PC-3 (cell line): ENCODE measurements at regions of chr15 and their contacts with region 1.

Region 1: GRCh38 chr15:69394556-69395282 is 19.4 kb upstream of the KIF23 start:
- DNase-seq: peak; percentile 78
- ATAC-seq: peak; percentile 72
- H3K4me3 ChIP-seq: no peak overlapping the region
- H3K27ac ChIP-seq: no peak overlapping the region
- H3K4me1 ChIP-seq: peaks cover 39% of the 10 kb centered on the region
- H3K27me3 ChIP-seq: no peaks in the 10 kb centered on the region
- CTCF ChIP-seq: peak; percentile 91

Region 2: GRCh38 chr15:69305204-69305931 is 89.4 kb before region 1 on chr15:
- CTCF ChIA-PET with region 1: no interaction called
- POLR2A ChIA-PET with region 1: no interaction called
- intact Hi-C with region 1: loop called (anchors 5 kb)
- DNase-seq: peak; percentile 90
- ATAC-seq: peak; percentile 90
- H3K4me3 ChIP-seq: no peak overlapping the region
- H3K27ac ChIP-seq: peak overlapping the region; percentile 81
- H3K4me1 ChIP-seq: peaks cover 41% of the 10 kb centered on the region
- H3K27me3 ChIP-seq: no peaks in the 10 kb centered on the region
- CTCF ChIP-seq: no peak

Region 3: GRCh38 chr15:69422336-69422895 is 27.7 kb after region 1 on chr15:
- CTCF ChIA-PET with region 1: no interaction called
- POLR2A ChIA-PET with region 1: no interaction called
- intact Hi-C with region 1: no loop called
- DNase-seq: no peak
- ATAC-seq: no peak
- H3K4me3 ChIP-seq: no peak overlapping the region
- H3K27ac ChIP-seq: no peak overlapping the region
- H3K4me1 ChIP-seq: no peaks in the 10 kb centered on the region
- H3K27me3 ChIP-seq: no peaks in the 10 kb centered on the region
- CTCF ChIP-seq: no peak

Region 4: DNA sequence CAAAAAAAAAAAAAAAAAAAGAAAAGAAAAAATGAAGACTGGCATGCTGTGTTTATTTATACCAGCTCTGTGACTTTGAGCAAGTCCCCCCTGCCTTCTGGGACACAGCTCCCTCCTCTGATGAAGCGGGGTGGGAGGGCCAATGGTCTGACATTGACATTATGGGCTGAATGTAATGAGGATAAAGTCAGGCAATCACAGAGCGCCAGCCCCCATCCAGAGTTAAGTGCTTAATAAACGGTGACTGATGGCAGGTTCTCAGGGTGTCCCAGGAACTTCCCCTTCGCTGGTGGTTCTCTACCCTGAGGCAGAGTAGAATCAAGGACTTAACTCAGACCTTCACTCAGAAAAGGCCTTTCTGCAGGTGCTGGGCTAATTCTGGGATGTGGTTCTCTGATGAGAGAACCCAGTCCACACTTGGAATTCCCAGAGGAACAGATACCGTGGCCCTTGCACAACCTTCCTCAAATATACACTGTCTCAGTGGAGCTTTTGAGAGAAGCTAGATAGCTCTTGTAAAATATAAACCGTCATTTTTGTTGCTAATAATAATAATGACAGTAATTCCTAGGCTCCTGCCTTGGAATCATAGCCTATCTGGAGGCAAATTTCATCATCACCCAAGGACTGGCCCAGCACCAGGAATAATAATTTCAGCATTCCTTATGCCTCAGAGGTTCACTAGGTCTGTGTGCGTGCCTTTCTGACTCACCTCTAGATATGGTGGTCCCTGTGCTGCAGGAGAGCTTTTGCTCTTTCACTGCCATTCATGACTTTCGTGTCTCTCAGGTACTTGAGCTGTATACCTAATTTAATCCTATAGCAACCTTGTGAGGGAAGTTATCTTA is 173.7 kb after region 1 on chr15:
- CTCF ChIA-PET with region 1: no interaction called
- POLR2A ChIA-PET with region 1: no interaction called
- intact Hi-C with region 1: no loop called
- DNase-seq: no peak
- ATAC-seq: no peak
- H3K4me3 ChIP-seq: no peak overlapping the region
- H3K27ac ChIP-seq: no peak overlapping the region
- H3K4me1 ChIP-seq: no peaks in the 10 kb centered on the region
- H3K27me3 ChIP-seq: no peaks in the 10 kb centered on the region
- CTCF ChIP-seq: no peak

Region 5: DNA sequence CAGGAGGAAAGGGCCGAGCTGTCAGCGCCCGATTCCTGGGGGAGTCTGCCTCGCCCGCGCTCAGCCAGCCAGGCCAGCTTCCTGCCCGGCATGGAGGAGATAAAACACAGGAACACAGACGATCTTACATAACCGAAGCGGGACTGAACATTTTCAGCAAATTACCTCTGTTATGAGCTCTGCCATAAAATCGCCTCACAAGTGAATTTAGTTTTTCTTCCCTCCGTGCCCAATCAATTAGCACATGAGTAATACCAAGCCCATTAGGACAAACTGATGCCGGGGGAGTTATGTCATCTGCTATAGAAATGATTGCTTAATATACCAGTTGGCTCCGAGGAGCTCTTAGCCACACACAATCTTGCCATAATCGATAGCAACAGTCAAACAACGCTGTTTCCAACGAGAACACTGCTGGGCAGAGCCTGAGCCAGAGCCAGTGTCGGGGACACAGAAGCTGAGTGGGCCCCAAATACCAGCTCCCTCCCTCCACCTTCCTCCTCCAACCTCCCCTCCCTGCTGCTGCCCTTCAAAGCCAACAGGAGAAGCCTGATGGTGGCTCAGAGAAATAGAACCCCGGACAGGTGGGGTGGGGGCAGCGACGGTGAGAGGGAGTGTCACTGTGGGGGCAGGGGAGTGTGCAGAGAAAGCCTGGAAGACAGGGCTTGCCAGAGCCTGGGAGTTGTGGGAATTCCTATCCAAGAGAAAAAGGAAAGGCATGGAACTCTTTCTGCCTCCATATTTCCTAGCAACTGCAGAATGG is 982.4 kb after region 1 on chr15:
- CTCF ChIA-PET with region 1: no interaction called
- POLR2A ChIA-PET with region 1: no interaction called
- intact Hi-C with region 1: no loop called
- DNase-seq: no peak
- ATAC-seq: no peak
- H3K4me3 ChIP-seq: no peak overlapping the region
- H3K27ac ChIP-seq: no peak overlapping the region
- H3K4me1 ChIP-seq: peaks cover 17% of the 10 kb centered on the region
- H3K27me3 ChIP-seq: no peaks in the 10 kb centered on the region
- CTCF ChIP-seq: no peak